MCF 10A (cell line): ENCODE measurements at regions of chr4 and their contacts with region 1.

Region 1: DNA sequence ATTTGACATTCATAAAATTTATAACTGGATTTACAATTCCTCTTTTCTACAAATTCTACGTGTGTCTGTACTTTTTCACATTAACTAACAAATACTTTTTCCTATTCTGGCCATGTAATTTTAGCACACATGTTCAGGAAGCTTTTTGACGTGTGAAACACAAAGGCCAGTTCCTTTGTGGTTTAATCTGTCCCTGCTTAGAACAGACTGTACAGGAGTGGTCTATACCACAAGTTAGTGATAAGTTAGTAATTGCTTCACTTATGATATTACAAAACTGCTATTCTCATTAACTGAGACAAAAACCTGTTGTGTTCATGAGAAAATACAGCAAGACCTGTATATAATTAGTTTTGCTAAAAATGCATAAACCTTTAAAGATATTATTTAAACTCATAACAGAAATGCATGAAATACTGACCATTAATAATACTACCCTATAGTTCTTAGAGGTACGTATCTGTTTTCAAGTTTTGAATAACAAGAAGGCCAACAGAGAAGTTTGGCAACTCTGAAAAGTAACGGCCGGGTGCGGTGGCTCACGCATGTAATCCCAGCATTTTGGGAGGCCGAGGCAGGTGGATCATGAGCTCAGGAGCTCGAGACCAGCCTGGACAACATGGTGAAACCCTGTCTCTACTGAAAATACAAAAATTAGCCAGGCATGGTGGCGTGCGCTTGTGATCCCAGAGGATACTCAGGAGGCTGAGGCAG is 13.7 kb upstream of the AREG start:
- DNase-seq: peak; percentile 86
- H3K4me3 Mint-ChIP-seq: peak overlapping the region; percentile 45
- H3K27ac Mint-ChIP-seq: peak overlapping the region; percentile 87
- H3K4me1 Mint-ChIP-seq: peaks cover 35% of the 10 kb centered on the region
- H3K27me3 Mint-ChIP-seq: no peaks in the 10 kb centered on the region
- CTCF ChIP-seq: no peak

Region 2: GRCh38 chr4:74181219-74181618 is 250.1 kb before region 1 on chr4:
- CTCF ChIA-PET with region 1: no interaction called
- POLR2A ChIA-PET with region 1: no interaction called
- intact Hi-C with region 1: no loop called
- DNase-seq: no peak
- H3K4me3 Mint-ChIP-seq: no peak overlapping the region
- H3K27ac Mint-ChIP-seq: no peak overlapping the region
- H3K4me1 Mint-ChIP-seq: no peaks in the 10 kb centered on the region
- H3K27me3 Mint-ChIP-seq: no peaks in the 10 kb centered on the region
- CTCF ChIP-seq: no peak

Region 3: GRCh38 chr4:74335341-74336021 is 95.8 kb before region 1 on chr4:
- CTCF ChIA-PET with region 1: no interaction called
- POLR2A ChIA-PET with region 1: no interaction called
- intact Hi-C with region 1: no loop called
- DNase-seq: no peak
- H3K4me3 Mint-ChIP-seq: no peak overlapping the region
- H3K27ac Mint-ChIP-seq: no peak overlapping the region
- H3K4me1 Mint-ChIP-seq: peaks cover 12% of the 10 kb centered on the region
- H3K27me3 Mint-ChIP-seq: no peaks in the 10 kb centered on the region
- CTCF ChIP-seq: no peak

Region 4: DNA sequence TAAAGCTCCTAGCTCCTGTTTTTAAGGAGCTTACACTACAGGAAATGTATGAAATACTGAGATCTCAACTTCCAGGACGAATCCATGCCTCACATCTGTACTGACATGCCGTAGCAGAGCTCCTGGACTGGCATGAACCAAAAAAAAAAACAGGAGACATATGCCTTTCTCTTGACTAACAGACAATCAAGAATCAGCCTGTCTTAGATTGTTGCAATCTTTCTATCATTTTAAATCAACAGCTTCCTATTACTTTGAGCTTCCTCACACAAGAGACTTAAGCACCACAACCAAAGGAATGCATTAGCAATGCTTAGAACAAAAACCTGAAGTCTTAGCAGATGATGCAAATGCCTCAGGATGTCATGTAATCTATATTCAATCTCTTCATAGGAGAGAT is 21.0 kb before region 1 on chr4:
- CTCF ChIA-PET with region 1: interaction called, 5 read pairs
- POLR2A ChIA-PET with region 1: interaction called, 131 read pairs
- intact Hi-C with region 1: no loop called
- DNase-seq: peak; percentile 70
- H3K4me3 Mint-ChIP-seq: peak overlapping the region; percentile 55
- H3K27ac Mint-ChIP-seq: peak overlapping the region; percentile 97
- H3K4me1 Mint-ChIP-seq: peaks cover 42% of the 10 kb centered on the region
- H3K27me3 Mint-ChIP-seq: no peaks in the 10 kb centered on the region
- CTCF ChIP-seq: no peak

Region 5: GRCh38 chr4:74418063-74418670 is 13.1 kb before region 1 on chr4:
- CTCF ChIA-PET with region 1: no interaction called
- POLR2A ChIA-PET with region 1: interaction called, 131 read pairs
- intact Hi-C with region 1: no loop called
- DNase-seq: peak; percentile 96
- H3K4me3 Mint-ChIP-seq: peak overlapping the region; percentile 61
- H3K27ac Mint-ChIP-seq: peak overlapping the region; percentile 94
- H3K4me1 Mint-ChIP-seq: peaks cover 63% of the 10 kb centered on the region
- H3K27me3 Mint-ChIP-seq: no peaks in the 10 kb centered on the region
- CTCF ChIP-seq: no peak

Region 6: GRCh38 chr4:75895744-75896314 is 1464.6 kb after region 1 on chr4:
- CTCF ChIA-PET with region 1: no interaction called
- POLR2A ChIA-PET with region 1: no interaction called
- intact Hi-C with region 1: no loop called
- DNase-seq: peak; percentile 54
- H3K4me3 Mint-ChIP-seq: no peak overlapping the region
- H3K27ac Mint-ChIP-seq: no peak overlapping the region
- H3K4me1 Mint-ChIP-seq: no peaks in the 10 kb centered on the region
- H3K27me3 Mint-ChIP-seq: no peaks in the 10 kb centered on the region
- CTCF ChIP-seq: peak; percentile 65